ENCODE measurements at regions of chr11 and their contacts with region 1.

Region 1: GRCh38 chr11:85810871-85811611 is at the start of gene SYTL2:
- DNase-seq: peak; percentile 74 to 90 (median 81)
- ATAC-seq: peak; percentile 91 to 99 (median 98)
- H3K4me3 ChIP-seq: peak within 1 kb of the TSS; percentile 22 to 87 (median 66)
- H3K27ac ChIP-seq: peak within 1 kb of the TSS in 6 of 12 donors; percentile 13 to 49 (median 34)
- H3K4me1 ChIP-seq: peaks cover 0 to 20% (median 8%) of the 10 kb centered on the region in 12 donors
- H3K27me3 ChIP-seq: peaks cover 0 to 4% (median 0%) of the 10 kb centered on the region in 9 donors
- CTCF ChIP-seq: peak in 4 of 12 donors; percentile 11 to 38 (median 22)
- POLR2A ChIP-seq: peak in 1 of 2 donors; percentile 87
- total RNA-seq, gene SYTL2: 2.2 to 9.5 (median 6.3) TPM

Region 2: GRCh38 chr11:85170226-85170625 is 640.8 kb before region 1 on chr11:
- intact Hi-C with region 1: no loop called
- DNase-seq: no peak
- ATAC-seq: no peak
- H3K4me3 ChIP-seq: no peak overlapping the region
- H3K27ac ChIP-seq: no peak overlapping the region
- H3K4me1 ChIP-seq: peaks cover 0 to 3% (median 0%) of the 10 kb centered on the region in 12 donors
- H3K27me3 ChIP-seq: no peaks in the 10 kb centered on the region
- CTCF ChIP-seq: no peak
- POLR2A ChIP-seq: no peak

Region 3: DNA sequence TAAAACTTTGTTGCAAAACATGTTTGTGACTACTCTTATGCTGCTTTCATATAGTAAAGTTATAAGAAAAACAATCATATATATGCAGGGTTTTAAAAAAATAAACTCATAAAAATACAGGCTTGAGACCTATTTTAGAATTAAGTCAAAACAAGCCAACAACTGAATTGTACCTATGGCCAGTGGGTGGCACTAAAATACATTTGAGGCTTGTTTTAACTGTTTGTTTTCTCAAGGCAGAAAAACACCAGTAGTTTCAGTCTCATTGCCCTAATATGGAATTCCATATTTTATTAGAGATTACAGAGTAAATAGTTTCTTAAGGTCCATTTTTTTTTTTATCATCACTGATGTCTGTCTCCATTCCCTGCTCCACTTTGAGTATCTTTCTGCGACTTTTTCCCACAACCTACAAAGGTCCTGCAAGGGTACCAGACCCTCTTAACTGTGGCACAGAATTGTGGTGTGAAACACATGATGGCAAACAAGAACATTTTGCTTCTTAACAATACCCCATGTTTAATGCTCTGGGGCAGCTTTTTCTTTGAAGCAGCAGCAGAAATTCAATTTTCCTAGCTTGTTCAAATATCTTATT is 116.6 kb before region 1 on chr11:
- intact Hi-C with region 1: loop called in 1 of 10 experiments (anchors 5 kb)
- DNase-seq: no peak
- ATAC-seq: no peak
- H3K4me3 ChIP-seq: no peak overlapping the region
- H3K27ac ChIP-seq: no peak overlapping the region
- H3K4me1 ChIP-seq: peaks cover 0 to 2% (median 0%) of the 10 kb centered on the region in 12 donors
- H3K27me3 ChIP-seq: no peaks in the 10 kb centered on the region
- CTCF ChIP-seq: peak; percentile 22 to 75 (median 52)
- POLR2A ChIP-seq: no peak

Region 4: DNA sequence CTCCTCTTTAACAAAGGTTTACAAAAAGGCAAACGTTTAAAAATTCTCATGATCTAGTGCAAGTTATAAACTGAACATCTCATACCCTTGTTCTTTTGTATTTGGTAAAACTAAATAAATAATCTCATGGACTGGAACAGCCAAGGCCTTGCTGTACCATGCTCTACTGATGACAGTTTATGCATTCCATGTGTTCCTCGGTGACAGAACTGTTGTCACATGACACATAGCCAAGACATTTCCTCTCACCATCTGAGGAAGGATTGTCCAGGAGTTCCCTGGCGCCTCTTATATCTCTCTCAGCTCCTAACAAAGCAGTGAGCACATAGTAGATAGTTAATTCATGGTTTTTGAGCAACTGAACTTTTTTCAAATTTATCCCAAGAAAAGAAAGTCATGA is 56.7 kb after region 1 on chr11:
- intact Hi-C with region 1: no loop called
- DNase-seq: no peak
- ATAC-seq: no peak
- H3K4me3 ChIP-seq: no peak overlapping the region
- H3K27ac ChIP-seq: no peak overlapping the region
- H3K4me1 ChIP-seq: no peaks in the 10 kb centered on the region
- H3K27me3 ChIP-seq: no peaks in the 10 kb centered on the region
- CTCF ChIP-seq: no peak
- POLR2A ChIP-seq: no peak

Region 5: GRCh38 chr11:86251345-86251744 is 440.3 kb after region 1 on chr11:
- intact Hi-C with region 1: loop called in 1 of 10 experiments (anchors 5 kb)
- DNase-seq: no peak
- ATAC-seq: no peak
- H3K4me3 ChIP-seq: no peak overlapping the region
- H3K27ac ChIP-seq: no peak overlapping the region
- H3K4me1 ChIP-seq: peaks cover 0 to 45% (median 27%) of the 10 kb centered on the region in 12 donors
- H3K27me3 ChIP-seq: no peaks in the 10 kb centered on the region
- CTCF ChIP-seq: no peak
- POLR2A ChIP-seq: no peak